ENCODE measurements at regions of chr6 and their contacts with region 1.

Region 1: GRCh38 chr6:85354761-85355618 is 94.9 kb upstream of the NT5E start:
- DNase-seq: peak; percentile 54 to 95 (median 68)

Region 2: DNA sequence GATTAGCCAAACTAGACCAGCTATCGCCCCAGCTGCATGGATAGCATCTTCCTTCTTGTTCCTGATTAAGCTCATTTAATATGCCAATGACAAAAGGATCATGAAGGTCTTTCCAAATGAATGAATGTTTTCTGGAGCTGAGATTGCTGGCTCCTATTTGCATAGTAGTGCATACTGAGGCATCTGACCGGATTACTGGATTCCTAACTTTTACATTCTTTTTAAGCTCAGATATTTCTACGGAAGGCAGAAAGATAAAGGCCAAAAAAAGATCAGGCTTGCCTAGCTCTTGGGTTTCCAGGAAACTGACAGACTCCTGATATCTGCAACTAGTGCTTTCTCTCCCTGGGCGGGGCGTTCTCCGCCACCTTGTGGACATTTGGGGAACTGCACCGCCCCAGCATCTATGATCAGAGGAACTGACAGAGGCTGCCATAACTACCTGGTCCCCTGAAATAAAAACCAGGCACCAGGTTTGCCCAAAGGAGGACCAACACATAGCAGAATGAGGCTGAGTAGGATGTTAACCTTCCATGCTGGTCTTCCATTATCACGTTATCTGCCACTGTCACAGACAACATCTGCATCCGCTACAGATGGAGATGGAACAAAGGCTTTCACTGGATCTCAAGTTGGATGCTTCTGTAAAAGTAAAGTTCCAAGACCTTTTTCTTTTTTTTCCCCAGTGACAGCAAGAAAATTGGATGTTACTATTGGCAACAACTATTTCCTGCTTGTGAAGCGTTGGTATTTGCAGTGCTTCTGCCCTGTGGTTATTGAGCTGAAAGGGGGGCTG is 128.1 kb after region 1 on chr6:
- intact Hi-C with region 1: loop called (anchors 1 kb)
- DNase-seq: peak; percentile 64 to 96 (median 82)

Region 3: DNA sequence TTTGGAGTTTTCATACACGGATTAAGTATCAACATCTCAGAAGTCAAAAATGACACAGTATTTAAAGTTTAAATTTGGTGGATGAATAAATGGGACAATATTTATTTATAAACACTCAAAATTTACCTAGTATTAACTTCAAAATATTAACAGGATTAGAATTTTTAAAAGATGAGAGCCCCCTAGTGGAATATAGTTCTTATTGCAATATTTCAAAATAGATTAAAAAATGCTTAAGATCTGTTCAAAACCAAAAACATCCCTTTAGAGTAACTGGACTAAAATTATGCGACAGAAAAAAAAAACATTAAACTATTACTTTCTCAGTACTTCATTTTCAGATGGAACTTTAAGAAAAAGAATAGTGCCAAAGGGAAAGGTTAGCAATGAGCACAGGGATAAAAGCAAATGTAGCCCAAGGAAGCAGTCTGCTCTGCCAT is 182.1 kb after region 1 on chr6:
- intact Hi-C with region 1: loop called (anchors 2 kb)
- DNase-seq: no peak

Region 4: DNA sequence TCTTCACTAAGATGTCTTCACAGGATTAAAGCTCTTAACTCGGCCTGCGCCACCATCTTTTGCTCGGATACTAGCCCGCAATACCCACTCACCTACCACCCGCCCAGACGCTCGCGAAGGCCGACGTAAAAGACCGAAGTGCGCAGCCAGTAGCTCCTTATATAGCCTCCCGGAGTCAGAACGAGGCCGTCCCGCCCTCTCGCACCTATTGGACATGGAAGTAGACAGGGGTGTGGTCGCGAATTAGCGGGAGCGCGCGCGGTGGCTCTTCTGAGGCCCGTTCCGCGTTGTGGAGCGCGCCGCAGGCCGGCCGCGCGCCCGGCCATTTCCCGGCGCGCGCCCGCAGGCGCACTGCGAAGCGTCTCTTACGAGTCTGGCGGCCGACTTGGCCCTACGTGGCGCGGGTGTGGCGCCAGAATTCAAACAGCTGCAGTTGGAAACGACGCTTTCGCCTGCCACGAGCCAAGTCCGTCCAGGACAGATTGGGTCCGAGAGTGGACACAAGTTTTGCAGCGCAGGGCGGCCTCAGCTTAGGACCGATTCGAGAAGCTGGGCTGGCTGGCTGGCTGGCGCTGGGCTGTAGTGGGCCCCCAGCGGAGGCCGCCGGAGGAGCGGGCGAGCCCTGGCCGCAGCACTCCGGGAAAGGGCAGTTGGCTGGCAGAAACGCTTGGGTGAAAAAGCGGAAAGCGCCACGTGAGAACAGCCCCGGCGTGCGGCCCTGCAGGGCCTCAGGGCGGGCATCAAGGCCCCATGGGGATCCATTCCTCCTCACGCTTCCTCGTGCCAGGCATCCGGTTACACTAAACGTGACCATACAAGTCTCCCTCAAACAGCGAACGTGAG is 323.8 kb after region 1 on chr6:
- intact Hi-C with region 1: loop called (anchors 2 kb)
- DNase-seq: peak; percentile 95 to 100 (median 97)

Measured in posterior cingulate gyrus (tissue), 11 donors.